ENCODE measurements at regions of chr5 and their contacts with region 1.

Region 1: GRCh38 chr5:16944816-16945562 is 8.9 kb upstream of the MYO10 start:
- DNase-seq: no peak
- ATAC-seq: no peak
- H3K4me3 ChIP-seq: no peak overlapping the region
- H3K27ac ChIP-seq: no peak overlapping the region
- H3K4me1 ChIP-seq: no peaks in the 10 kb centered on the region
- H3K27me3 ChIP-seq: no peaks in the 10 kb centered on the region
- CTCF ChIP-seq: no peak

Region 2: DNA sequence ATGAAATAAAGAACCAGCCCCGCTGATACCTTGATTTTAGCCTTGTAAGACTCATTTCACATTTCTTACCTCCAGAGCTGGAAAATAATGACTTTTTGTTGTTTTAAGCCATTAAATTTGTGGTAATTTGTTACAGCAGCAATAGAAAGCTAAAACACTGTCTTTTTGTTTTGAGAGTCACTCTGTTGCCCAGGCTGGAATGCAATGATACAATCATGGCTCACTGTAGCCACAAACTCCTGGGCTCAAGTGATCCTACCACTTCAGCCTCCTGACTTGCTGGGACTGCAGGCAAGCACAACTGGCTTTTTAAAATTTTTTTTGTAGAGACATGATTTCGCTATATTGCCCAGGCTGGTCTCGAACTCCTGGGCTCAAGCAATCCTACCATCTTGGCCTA is 25.8 kb after region 1 on chr5:
- intact Hi-C with region 1: loop called in 1 of 10 experiments (anchors 1 kb)
- DNase-seq: no peak
- ATAC-seq: no peak
- H3K4me3 ChIP-seq: no peak overlapping the region
- H3K27ac ChIP-seq: no peak overlapping the region
- H3K4me1 ChIP-seq: no peaks in the 10 kb centered on the region
- H3K27me3 ChIP-seq: no peaks in the 10 kb centered on the region
- CTCF ChIP-seq: no peak

Region 3: DNA sequence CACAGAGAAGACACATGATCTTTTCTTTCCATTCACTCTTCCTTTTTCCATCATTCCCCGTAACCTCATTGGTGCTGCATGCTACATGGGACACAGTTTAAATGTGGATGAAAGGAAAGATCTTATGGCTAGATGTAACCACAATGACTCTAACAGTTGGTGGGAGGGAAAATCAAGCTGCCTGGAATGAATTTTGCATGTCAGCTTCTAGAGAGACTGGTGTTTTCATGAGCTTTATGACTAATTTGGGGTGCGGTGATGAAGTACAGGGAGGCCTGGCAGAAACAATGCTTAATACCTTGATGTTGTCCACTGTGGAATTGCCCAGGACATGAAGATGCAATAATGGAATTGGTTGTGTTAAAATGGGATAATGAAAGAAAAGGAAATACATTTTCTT is 47.0 kb after region 1 on chr5:
- intact Hi-C with region 1: loop called in 2 of 10 experiments (anchors 2 to 10 kb)
- DNase-seq: no peak
- ATAC-seq: no peak
- H3K4me3 ChIP-seq: no peak overlapping the region
- H3K27ac ChIP-seq: no peak overlapping the region
- H3K4me1 ChIP-seq: peaks cover 0 to 17% (median 3%) of the 10 kb centered on the region in 9 donors
- H3K27me3 ChIP-seq: no peaks in the 10 kb centered on the region
- CTCF ChIP-seq: no peak

Measured in heart right ventricle (tissue), 16 donors.